ENCODE measurements at regions of chr4 and their contacts with region 1.

Region 1: DNA sequence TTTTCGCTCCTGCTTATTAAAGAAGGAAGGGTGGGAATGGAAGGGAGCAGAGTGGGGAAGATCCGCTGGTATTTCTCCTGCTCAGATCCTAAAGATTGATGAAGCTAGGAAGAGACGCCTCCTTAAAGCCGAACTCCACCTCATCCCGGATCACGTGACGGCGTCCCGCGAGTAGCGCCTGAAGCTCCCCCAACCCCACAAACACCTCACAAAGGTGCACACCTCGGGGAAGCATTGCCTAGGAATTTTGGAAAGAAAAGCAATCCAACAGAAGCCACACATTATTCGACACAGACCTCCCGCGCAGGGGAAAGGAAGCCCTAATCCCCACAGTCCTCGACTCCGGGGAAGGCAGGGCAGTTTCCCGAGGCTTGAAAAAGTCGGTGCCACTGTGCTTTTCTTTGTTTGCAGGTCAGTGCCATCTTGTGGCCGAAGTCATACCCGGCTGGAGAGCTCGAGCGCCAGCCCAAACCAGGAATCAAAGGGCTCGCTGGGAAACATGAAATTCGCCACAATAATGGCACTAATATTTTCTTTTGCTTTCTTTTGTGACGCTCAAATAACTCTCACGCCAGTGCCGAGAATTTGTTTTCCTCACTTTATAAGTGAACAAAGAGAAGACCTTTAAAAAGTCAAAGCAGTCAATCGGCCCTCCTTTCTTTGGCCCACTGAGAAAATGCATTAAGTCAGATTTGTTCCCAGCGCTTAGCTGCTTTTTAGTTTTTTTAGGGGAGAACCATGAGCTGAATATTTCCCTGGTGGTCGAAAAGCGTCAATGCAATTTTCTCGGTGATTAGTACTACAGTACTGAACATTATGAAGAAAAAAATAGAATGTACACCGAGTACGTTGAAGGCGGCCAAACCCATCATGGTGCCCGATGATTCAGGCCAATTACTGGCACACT is at the start of gene NPY1R:
- DNase-seq: peak; percentile 40 to 71
- ATAC-seq: peak; percentile 81 to 97 (median 91)
- H3K4me3 ChIP-seq: peak within 1 kb of the TSS; percentile 72
- H3K27ac ChIP-seq: no peak within 1 kb of the TSS
- H3K4me1 ChIP-seq: peaks cover 5% of the 10 kb centered on the region
- H3K27me3 ChIP-seq: peaks cover 3 to 31% (median 5%) of the 10 kb centered on the region in 3 donors
- CTCF ChIP-seq: peak; percentile 61
- total RNA-seq, gene NPY1R: 0.55 to 1.2 (median 0.71) TPM

Region 2: GRCh38 chr4:162497564-162498167 is 835.1 kb before region 1 on chr4:
- intact Hi-C with region 1: loop called (anchors 1 to 5 kb)
- DNase-seq: no peak
- ATAC-seq: peak; percentile 67 to 80 (median 70)
- H3K4me3 ChIP-seq: peak overlapping the region; percentile 42
- H3K27ac ChIP-seq: no peak overlapping the region
- H3K4me1 ChIP-seq: no peaks in the 10 kb centered on the region
- H3K27me3 ChIP-seq: no peaks in the 10 kb centered on the region
- CTCF ChIP-seq: peak; percentile 85

Region 3: GRCh38 chr4:162645381-162645780 is 687.4 kb before region 1 on chr4:
- intact Hi-C with region 1: loop called in 1 of 2 experiments (anchors 10 kb)
- DNase-seq: no peak
- ATAC-seq: peak in 3 of 4 donors; percentile 55 to 69 (median 55)
- H3K4me3 ChIP-seq: no peak overlapping the region
- H3K27ac ChIP-seq: no peak overlapping the region
- H3K4me1 ChIP-seq: no peaks in the 10 kb centered on the region
- H3K27me3 ChIP-seq: no peaks in the 10 kb centered on the region
- CTCF ChIP-seq: peak; percentile 62

Region 4: GRCh38 chr4:163048447-163048846 is 284.3 kb before region 1 on chr4:
- intact Hi-C with region 1: loop called in 1 of 2 experiments (anchors 5 kb)
- DNase-seq: no peak
- ATAC-seq: no peak
- H3K4me3 ChIP-seq: no peak overlapping the region
- H3K27ac ChIP-seq: no peak overlapping the region
- H3K4me1 ChIP-seq: no peaks in the 10 kb centered on the region
- H3K27me3 ChIP-seq: no peaks in the 10 kb centered on the region
- CTCF ChIP-seq: peak; percentile 26

Region 5: GRCh38 chr4:163107754-163108153 is 225.0 kb before region 1 on chr4:
- intact Hi-C with region 1: loop called in 1 of 2 experiments (anchors 5 kb)
- DNase-seq: no peak
- ATAC-seq: no peak
- H3K4me3 ChIP-seq: no peak overlapping the region
- H3K27ac ChIP-seq: no peak overlapping the region
- H3K4me1 ChIP-seq: no peaks in the 10 kb centered on the region
- H3K27me3 ChIP-seq: no peaks in the 10 kb centered on the region
- CTCF ChIP-seq: peak; percentile 19

Measured in psoas muscle (tissue), 8 donors.